Activated CD8-positive, alpha-beta memory T cell treated with anti-CD3 and anti-CD28 coated beads, Interleukin-2, amount 10 ng/mL, durations not matched to agents 7 days and 5 days (primary cell): ENCODE measurements at regions of chr11 and their contacts with region 1.

Region 1: DNA sequence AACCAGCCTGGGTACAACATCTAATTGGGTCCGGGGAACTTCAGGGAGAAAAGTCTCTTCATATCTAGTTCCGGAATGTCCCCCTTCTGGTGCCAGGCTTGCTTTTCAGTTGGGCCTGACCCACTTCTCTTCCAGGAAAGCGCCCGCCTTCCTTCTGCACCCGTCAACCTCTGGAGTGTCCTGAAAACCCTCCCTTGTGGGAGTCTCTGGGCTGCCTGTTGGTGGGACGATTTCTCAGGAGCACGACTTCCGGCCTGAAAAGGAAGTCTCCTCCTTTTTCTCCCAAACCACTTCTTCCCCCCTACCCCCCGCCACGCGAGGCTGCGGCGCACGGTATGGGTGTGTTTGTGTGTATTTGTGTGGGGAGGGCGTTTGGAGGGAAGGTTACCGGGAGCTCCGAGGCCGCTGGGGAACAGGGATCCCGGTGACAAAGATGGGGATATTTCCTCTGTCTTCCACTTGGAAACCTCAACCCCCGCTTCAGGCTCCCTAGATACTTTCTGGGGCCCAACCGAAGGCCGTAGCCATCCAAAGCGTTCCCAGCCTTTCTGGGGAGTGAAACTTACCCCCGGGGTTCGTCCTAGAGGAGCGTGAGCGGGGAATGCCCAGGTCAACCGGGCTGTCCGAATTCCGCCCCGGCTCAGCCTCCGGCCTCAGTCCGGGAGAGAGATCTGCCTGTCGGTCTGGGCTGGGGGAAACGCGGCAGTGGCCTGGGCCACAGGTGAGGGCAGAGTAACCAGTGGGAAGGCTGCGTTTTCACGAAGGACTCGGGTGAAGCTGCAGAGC is at the start of gene NKAPD1:
- DNase-seq: peak; percentile 90
- ATAC-seq: peak; percentile 87
- H3K4me3 Mint-ChIP-seq: peak within 1 kb of the TSS; percentile 93
- H3K27ac Mint-ChIP-seq: peak within 1 kb of the TSS; percentile 94
- H3K4me1 Mint-ChIP-seq: peaks cover 29% of the 10 kb centered on the region
- H3K27me3 Mint-ChIP-seq: peaks cover 17% of the 10 kb centered on the region
- total RNA-seq, gene NKAPD1: 20.6 to 22.5 TPM

Region 2: GRCh38 chr11:111623527-111624030 is 450.6 kb before region 1 on chr11:
- CTCF ChIA-PET with region 1: no interaction called
- DNase-seq: no peak
- ATAC-seq: no peak
- H3K4me3 Mint-ChIP-seq: no peak overlapping the region
- H3K27ac Mint-ChIP-seq: no peak overlapping the region
- H3K4me1 Mint-ChIP-seq: no peaks in the 10 kb centered on the region
- H3K27me3 Mint-ChIP-seq: no peaks in the 10 kb centered on the region

Region 3: GRCh38 chr11:112033156-112033555 is 41.1 kb before region 1 on chr11:
- CTCF ChIA-PET with region 1: no interaction called
- DNase-seq: no peak
- ATAC-seq: no peak
- H3K4me3 Mint-ChIP-seq: no peak overlapping the region
- H3K27ac Mint-ChIP-seq: no peak overlapping the region
- H3K4me1 Mint-ChIP-seq: peaks cover 11% of the 10 kb centered on the region
- H3K27me3 Mint-ChIP-seq: no peaks in the 10 kb centered on the region

Region 4: DNA sequence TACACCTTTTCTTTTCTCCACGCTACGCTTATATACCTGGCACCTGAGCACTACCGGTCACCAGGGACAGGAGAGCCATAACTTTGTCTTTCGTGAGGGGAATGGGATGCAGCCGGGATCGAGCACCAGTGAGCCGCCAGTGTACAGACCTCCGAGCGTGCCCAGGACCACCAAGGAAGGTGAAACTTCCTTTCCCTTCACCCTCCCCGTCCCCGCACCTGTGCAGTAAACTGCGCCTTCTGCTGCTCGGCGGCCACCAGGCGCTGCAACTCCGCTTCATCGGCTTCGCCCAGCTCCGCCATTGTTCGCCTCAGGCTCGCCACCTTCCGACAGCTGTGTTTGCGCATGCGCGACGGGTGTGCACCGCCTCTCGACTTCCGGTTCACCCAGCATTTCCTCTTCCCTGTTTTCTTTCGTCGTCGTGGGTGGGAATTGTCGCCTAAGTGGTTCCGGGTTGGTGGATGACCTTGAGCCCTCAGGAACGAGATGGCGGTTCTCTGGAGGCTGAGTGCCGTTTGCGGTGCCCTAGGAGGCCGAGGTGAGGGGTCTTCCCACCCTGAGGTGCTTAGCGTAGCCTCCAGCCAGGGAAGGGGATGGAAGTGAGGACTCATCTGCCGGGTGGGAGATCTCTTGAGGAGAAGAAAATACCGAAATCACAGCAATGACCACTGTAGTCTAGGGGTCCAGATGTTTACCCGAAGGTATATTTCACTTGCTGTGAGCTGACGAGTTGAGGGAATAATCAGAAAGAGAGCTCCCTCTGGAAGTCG is 12.4 kb after region 1 on chr11 and contains the starts of genes SDHD and TIMM8B:
- CTCF ChIA-PET with region 1: interaction called, 12 read pairs
- DNase-seq: peak; percentile 97
- ATAC-seq: peak; percentile 89
- H3K4me3 Mint-ChIP-seq: peak within 1 kb of the TSS; percentile 94
- H3K27ac Mint-ChIP-seq: peak within 1 kb of the TSS; percentile 92
- H3K4me1 Mint-ChIP-seq: peaks cover 60% of the 10 kb centered on the region
- H3K27me3 Mint-ChIP-seq: no peaks in the 10 kb centered on the region
- total RNA-seq, gene SDHD: 71.8 to 93.5 TPM
- total RNA-seq, gene TIMM8B: 44.2 to 59.8 TPM

Region 5: DNA sequence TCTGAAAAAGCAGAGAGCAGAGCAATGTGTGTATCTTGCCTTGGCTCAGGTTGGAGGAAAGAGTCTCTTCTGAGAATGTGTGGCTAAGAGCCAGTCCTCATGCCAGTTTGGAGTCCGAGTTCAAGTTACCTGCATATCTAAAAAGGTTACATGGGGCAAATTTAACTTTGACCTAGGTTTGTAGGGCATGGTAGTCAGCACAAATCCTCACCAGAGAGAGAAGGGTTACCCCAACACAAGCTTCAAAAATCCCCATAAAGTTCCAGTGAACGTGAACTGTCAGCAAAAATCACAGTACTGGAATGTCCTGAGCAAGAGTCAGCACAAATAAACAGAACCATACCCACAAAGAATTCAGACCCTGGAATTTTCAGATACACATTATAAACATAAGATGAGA is 26.2 kb after region 1 on chr11:
- CTCF ChIA-PET with region 1: no interaction called
- DNase-seq: no peak
- ATAC-seq: no peak
- H3K4me3 Mint-ChIP-seq: no peak overlapping the region
- H3K27ac Mint-ChIP-seq: no peak overlapping the region
- H3K4me1 Mint-ChIP-seq: no peaks in the 10 kb centered on the region
- H3K27me3 Mint-ChIP-seq: no peaks in the 10 kb centered on the region

Region 6: DNA sequence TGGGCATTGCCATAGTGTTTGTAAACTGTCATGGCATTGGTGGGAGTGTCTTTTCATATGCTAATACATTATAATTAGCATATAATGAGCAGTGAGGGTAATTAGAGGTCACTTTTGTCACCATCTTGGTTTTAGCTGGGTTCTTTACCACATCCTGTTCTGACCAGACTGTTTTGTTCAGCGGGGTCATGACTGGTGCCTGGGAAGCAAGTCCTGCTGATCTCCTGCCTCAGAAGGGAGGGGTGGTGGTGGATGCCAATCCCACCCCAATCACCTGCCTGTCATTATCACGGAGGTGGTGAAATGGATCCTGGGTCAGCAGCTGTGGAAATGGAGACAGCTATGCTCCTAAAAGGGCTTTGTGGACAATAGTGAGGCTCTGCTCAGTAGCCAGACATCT is 58.5 kb after region 1 on chr11:
- CTCF ChIA-PET with region 1: no interaction called
- DNase-seq: no peak
- ATAC-seq: no peak
- H3K4me3 Mint-ChIP-seq: no peak overlapping the region
- H3K27ac Mint-ChIP-seq: no peak overlapping the region
- H3K4me1 Mint-ChIP-seq: peaks cover 11% of the 10 kb centered on the region
- H3K27me3 Mint-ChIP-seq: no peaks in the 10 kb centered on the region